MCF 10A (cell line): ENCODE measurements at regions of chr14 and their contacts with region 1.

Region 1: GRCh38 chr14:61894452-61895077 is 132.3 kb downstream of the SNAPC1 start:
- DNase-seq: peak; percentile 81
- H3K4me3 Mint-ChIP-seq: no peak overlapping the region
- H3K27ac Mint-ChIP-seq: no peak overlapping the region
- H3K4me1 Mint-ChIP-seq: peaks cover 8% of the 10 kb centered on the region
- H3K27me3 Mint-ChIP-seq: peaks cover 11% of the 10 kb centered on the region
- CTCF ChIP-seq: peak; percentile 75

Region 2: DNA sequence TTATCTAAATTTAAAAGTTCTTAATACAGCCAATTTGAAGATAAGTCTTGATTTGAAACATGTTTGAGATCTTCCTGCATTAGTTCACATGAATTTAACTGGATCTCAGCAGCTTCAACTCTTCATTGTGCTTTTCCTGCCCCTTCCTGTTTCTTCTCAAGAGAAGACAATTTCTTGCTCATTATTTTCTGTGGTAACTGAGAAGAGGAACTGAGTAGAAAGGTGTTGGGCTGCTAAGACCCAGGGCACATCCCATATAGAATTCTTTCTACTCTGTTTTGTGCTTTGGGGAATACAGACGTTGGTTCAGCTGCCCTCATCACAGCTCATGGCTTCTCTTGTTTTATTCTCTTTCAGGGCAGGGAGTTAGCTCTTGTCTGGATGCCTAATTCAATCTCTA is 22.1 kb before region 1 on chr14:
- CTCF ChIA-PET with region 1: interaction called, 10 read pairs
- POLR2A ChIA-PET with region 1: no interaction called
- intact Hi-C with region 1: no loop called
- DNase-seq: no peak
- H3K4me3 Mint-ChIP-seq: no peak overlapping the region
- H3K27ac Mint-ChIP-seq: no peak overlapping the region
- H3K4me1 Mint-ChIP-seq: no peaks in the 10 kb centered on the region
- H3K27me3 Mint-ChIP-seq: no peaks in the 10 kb centered on the region
- CTCF ChIP-seq: no peak